Activated naive CD4-positive, alpha-beta T cell treated with anti-CD3 and anti-CD28 coated beads for 36 hours (primary cell): ENCODE measurements at regions of chr14 and their contacts with region 1.

Region 1: DNA sequence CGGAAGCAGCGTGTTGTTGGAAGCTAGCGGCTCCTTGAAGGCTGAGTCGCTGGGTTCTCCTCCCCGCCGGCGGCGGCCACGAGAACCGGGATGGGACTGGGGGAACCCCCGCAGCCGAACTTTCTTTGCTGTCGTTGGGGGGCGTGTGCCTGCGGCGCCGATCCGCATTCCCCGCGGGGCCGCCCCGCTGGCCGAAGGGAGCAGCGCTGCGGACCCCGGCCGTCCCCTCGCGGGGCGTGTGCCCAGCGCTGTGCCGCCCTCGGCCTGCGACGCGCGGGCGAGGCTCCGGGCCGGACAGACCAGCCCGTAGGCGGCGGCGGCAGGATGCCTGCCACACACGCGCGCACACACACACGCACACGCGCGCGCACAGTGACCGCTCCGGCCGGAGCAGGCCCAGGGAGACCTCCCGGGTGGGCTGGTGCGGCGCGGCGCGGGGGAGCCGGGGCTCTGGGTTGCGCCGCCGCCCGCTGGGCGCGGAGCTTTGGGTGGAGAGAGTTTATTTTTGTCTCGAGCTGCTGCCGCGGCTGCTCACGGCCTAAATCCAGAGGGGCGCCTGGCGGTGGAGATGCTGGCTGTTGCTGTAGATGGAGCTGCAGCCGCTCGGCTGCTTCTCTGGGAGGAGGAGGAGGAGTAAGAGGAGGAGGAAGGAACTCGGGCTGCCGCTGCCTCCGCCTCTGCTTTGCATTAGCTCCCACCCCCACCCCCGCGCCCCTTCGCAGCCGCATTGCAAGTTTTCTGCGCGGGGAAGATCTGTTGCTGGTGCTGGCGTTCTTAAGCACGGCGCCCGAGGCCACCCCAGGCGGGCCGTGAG is at the start of gene SAMD4A:
- DNase-seq: peak; percentile 75
- H3K4me3 Mint-ChIP-seq: peak within 1 kb of the TSS; percentile 94
- H3K27ac Mint-ChIP-seq: peak within 1 kb of the TSS; percentile 79
- H3K4me1 Mint-ChIP-seq: peaks cover 26% of the 10 kb centered on the region
- H3K27me3 Mint-ChIP-seq: no peaks in the 10 kb centered on the region
- total RNA-seq, gene SAMD4A: 4.7 to 4.9 TPM

Region 2: GRCh38 chr14:54366736-54367735 is 199.6 kb before region 1 on chr14:
- CTCF ChIA-PET with region 1: no interaction called
- intact Hi-C with region 1: loop called (anchors 2 kb)
- DNase-seq: peak; percentile 53
- H3K4me3 Mint-ChIP-seq: no peak overlapping the region
- H3K27ac Mint-ChIP-seq: no peak overlapping the region
- H3K4me1 Mint-ChIP-seq: no peaks in the 10 kb centered on the region
- H3K27me3 Mint-ChIP-seq: peaks cover 3% of the 10 kb centered on the region

Region 3: DNA sequence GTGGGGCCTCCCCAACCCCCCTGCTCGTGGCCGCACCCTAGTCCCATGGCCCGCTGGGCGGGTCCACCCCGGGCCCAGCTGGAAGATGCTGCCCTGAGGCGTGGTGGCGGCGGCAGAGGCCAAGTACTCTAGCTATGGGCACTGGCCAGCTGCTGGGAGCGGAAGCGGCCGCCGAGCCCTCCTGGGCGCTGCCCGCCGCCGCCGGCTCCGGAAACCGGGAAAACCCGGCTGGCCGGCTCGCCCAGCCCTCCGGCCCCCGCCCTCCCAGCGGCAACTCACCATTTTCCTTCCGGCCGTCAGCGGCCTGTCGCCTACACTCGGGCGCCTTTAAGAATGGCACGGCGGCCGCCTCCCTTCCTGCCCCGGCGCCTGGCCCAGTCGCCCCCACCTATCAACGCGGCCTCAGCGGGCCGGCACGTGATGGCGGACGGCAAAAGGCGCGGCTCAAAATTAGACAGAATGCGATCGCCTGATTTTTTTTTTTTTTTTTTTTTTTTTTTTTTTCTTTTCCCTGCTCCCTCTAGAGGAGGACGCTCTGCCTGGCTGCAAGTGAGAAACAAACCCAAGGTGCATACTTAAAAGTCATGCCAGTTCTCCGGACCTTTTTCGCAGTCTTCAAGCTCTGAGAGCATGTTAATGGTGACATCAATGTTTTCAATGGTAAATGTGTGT is 77.8 kb before region 1 on chr14 and contains the start of gene GMFB:
- CTCF ChIA-PET with region 1: interaction called, 4 read pairs
- intact Hi-C with region 1: loop called (anchors 1 kb)
- DNase-seq: peak; percentile 91
- H3K4me3 Mint-ChIP-seq: peak within 1 kb of the TSS; percentile 85
- H3K27ac Mint-ChIP-seq: peak within 1 kb of the TSS; percentile 88
- H3K4me1 Mint-ChIP-seq: peaks cover 54% of the 10 kb centered on the region
- H3K27me3 Mint-ChIP-seq: no peaks in the 10 kb centered on the region
- total RNA-seq, gene GMFB: 29.5 to 33.4 TPM

Region 4: DNA sequence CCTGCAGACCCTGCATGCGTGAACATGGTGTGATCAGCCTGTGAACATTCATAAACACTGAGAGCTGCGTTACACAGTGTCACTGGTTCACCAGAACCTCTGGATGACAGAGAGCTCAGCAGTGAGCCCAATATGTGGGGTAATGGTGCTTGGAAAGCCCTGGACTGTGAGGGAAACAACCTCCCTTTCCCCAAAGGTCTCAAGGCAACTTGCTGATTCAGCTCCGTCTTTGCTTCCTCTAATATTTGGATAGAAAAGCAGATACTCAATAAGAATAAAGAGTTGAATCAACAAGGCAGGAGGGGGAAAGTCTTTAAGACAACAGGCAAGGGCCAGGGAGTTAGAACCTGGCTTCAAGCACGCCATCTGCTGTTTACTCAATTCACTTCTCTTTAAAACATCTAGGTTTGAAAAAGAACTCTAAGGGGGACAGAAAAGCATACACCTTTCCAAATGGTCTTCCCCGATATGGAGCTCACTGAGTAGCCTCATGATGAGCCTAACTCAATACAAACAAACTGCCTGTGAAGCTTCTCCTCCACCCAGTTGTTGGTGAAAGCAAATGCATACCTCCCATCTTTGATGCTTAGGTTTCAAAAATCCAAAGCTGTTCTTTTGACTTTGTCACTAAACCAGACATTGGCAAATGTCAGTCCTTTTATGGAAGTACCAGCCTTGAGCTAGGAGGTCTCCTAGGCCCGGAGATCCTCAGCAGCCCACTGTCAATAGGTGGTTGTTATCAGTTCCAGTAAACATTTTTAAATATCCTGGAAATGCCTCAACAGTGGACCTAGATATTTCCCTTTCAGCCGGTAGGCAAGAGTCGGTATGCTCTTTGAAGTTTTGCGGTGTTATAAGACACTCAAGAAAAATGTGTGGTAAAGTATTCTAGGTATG is 76.4 kb after region 1 on chr14:
- CTCF ChIA-PET with region 1: interaction called, 9 read pairs
- intact Hi-C with region 1: loop called (anchors 1 kb)
- DNase-seq: peak; percentile 28
- H3K4me3 Mint-ChIP-seq: no peak overlapping the region
- H3K27ac Mint-ChIP-seq: no peak overlapping the region
- H3K4me1 Mint-ChIP-seq: peaks cover 19% of the 10 kb centered on the region
- H3K27me3 Mint-ChIP-seq: no peaks in the 10 kb centered on the region

Region 5: DNA sequence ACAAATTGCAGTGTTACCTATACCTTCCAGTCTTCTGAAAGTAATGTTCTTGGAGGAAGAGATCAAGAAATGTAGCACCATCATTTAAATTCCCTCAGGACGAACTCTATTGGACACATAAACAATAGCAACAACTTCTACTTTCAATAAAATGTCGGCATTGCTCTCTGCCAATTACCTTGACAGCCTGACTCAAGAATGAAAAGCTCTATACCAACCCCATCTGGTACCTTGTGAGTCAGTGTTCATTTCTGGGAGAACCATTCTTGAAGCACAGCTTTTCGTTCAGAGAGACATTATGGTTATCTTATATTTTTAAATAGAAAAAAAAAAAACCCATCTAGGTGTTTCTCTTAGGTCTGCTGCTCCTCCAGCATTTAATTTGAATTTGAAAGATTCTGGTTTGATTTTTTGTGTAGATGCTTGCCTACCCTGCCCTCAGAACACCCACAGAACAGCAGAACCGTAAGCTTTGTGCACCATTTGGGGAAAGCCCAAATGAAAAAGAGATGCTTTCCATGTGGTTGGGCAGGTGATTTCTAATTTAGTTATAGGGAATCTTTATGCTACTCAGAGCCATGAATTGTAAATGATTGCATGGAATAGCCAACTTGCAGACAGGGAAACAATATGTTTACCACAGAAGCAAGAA is 156.3 kb after region 1 on chr14:
- CTCF ChIA-PET with region 1: interaction called, 39 read pairs
- intact Hi-C with region 1: loop called (anchors 1 kb)
- DNase-seq: peak; percentile 47
- H3K4me3 Mint-ChIP-seq: no peak overlapping the region
- H3K27ac Mint-ChIP-seq: no peak overlapping the region
- H3K4me1 Mint-ChIP-seq: peaks cover 8% of the 10 kb centered on the region
- H3K27me3 Mint-ChIP-seq: peaks cover 5% of the 10 kb centered on the region

Region 6: GRCh38 chr14:54881235-54881760 is 314.7 kb after region 1 on chr14:
- CTCF ChIA-PET with region 1: interaction called, 4 read pairs
- intact Hi-C with region 1: loop called (anchors 5 kb)
- DNase-seq: peak; percentile 38
- H3K4me3 Mint-ChIP-seq: peak overlapping the region; percentile 78
- H3K27ac Mint-ChIP-seq: peak overlapping the region; percentile 96
- H3K4me1 Mint-ChIP-seq: peaks cover 34% of the 10 kb centered on the region
- H3K27me3 Mint-ChIP-seq: no peaks in the 10 kb centered on the region